ENCODE measurements at regions of chr11 and their contacts with region 1.

Region 1: GRCh38 chr11:65497141-65498041 is 1.5 kb upstream of the MALAT1 start:
- DNase-seq: peak; percentile 96 to 99 (median 98)
- ATAC-seq: peak; percentile 77 to 80
- H3K4me3 Mint-ChIP-seq: no peak overlapping the region
- H3K27ac Mint-ChIP-seq: no peak overlapping the region
- H3K4me1 Mint-ChIP-seq: peaks cover 16 to 31% (median 24%) of the 10 kb centered on the region in 4 donors
- H3K27me3 Mint-ChIP-seq: no peaks in the 10 kb centered on the region

Region 2: DNA sequence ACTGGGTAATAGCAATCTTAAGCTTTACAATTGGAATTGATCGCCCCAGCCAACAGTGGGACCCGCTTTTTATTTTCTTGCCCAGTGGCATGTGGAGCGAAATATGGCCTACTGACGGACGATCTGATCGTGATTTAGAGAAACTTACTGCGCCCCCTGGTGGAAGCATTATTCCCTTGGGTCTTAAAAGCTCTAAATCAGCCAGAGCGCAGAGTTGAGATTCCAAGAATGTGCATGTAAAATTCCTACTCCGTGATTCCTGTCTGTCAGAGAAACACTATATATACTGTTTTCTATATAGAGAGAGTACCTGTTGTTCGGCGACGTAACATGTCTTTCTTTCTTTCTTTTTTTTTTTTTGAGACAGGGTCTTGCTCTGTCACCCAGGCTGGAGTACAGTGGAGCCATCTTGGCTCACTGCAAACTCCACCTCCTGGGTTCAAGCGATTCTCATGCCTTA is 167.4 kb before region 1 on chr11:
- POLR2A ChIA-PET with region 1: interaction called, 22 read pairs
- DNase-seq: peak; percentile 63 to 92 (median 78)
- ATAC-seq: peak; percentile 19 to 24
- H3K4me3 Mint-ChIP-seq: peak overlapping the region in 3 of 10 donors; percentile 20 to 50 (median 26)
- H3K27ac Mint-ChIP-seq: peak overlapping the region in 9 of 10 donors; percentile 19 to 85 (median 71)
- H3K4me1 Mint-ChIP-seq: peaks cover 14 to 23% (median 19%) of the 10 kb centered on the region in 4 donors
- H3K27me3 Mint-ChIP-seq: peaks cover 0 to 4% (median 0%) of the 10 kb centered on the region in 5 donors

Region 3: DNA sequence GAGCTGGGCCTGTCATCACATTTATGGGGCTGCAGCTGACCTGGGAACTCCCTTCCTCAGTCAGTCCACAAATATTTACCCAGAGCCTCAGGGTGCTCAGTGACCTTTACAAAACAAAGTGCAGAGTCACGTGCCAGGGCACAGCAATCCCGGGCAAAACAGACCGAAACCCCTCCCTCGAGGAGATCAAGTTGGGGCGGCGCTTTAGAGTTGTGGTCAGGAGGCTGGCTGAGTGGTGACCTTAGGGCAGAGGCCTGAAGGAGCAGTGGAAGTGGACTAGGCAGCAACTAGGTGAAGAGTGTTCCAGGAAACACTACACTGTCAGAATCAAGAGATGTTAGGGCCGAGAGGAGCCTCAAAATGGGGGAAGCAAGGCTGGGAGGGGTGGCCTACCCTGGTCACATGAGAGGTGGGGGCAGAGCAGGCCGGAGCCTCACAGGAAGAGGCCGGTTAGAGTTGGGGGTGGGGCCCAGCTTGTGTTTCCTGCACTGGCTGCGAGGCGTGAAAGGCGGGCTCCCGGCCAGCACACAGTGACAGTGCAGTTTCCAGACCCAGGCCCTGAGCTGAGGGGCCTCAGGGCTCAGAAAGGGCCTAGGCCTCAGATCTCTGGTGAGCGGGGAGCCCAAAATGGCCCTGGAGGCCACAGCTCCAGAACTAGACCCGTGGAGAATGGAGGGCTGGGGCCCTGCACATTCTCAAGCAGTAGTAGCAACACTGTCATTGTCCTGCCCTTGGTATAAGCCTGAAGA is 78.5 kb before region 1 on chr11:
- POLR2A ChIA-PET with region 1: interaction called, 2,047 read pairs
- DNase-seq: peak in 9 of 10 donors; percentile 30 to 89 (median 53)
- ATAC-seq: peak in 1 of 2 donors; percentile 7
- H3K4me3 Mint-ChIP-seq: peak overlapping the region; percentile 89 to 98 (median 96)
- H3K27ac Mint-ChIP-seq: peak overlapping the region; percentile 94 to 100 (median 99)
- H3K4me1 Mint-ChIP-seq: peaks cover 38 to 72% (median 58%) of the 10 kb centered on the region in 4 donors
- H3K27me3 Mint-ChIP-seq: peaks cover 0 to 4% (median 0%) of the 10 kb centered on the region in 5 donors

Region 4: DNA sequence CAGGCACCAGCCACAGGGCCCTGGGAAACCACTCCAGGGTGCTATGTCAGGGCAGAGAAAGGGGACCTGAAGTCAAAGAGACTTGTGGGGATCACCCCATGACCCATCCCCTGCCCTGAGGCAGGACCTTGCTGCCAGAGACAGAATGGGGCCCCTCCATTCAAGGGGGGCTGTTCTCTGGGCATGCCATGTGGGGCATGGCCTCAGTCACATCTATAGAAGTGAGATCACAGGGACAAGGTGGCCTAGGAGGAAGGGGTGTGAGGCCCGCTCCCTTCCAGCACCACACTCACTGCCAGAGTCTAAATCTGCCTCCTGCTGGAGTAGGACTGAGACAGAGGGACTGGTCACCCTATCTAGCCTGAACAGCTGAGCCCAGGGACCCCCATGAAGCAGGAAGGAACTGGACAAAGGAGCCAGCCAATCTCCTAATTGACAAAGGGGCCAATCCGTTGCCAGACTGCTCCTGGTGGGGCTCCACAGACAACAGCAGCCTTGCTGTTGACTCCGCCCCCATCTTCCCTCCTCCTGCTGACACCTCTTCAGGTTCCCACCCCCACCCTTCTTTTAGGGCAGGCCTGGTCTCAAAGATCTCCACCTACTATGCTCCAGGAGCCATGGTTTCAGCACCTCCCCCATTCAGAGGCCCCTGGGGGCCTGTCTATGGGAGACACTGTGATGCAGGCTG is 48.8 kb before region 1 on chr11:
- POLR2A ChIA-PET with region 1: interaction called, 10 read pairs
- DNase-seq: no peak
- ATAC-seq: no peak
- H3K4me3 Mint-ChIP-seq: no peak overlapping the region
- H3K27ac Mint-ChIP-seq: peak overlapping the region in 8 of 10 donors; percentile 19 to 79 (median 38)
- H3K4me1 Mint-ChIP-seq: peaks cover 4 to 21% (median 8%) of the 10 kb centered on the region in 4 donors
- H3K27me3 Mint-ChIP-seq: no peaks in the 10 kb centered on the region

Region 5: GRCh38 chr11:65524741-65525545 is 27.6 kb after region 1 on chr11 and contains the start of gene SCYL1:
- POLR2A ChIA-PET with region 1: interaction called, 58 read pairs
- DNase-seq: peak; percentile 68 to 91 (median 80)
- ATAC-seq: peak; percentile 64 to 73
- H3K4me3 Mint-ChIP-seq: peak within 1 kb of the TSS; percentile 77 to 96 (median 88)
- H3K27ac Mint-ChIP-seq: peak within 1 kb of the TSS; percentile 90 to 99 (median 95)
- H3K4me1 Mint-ChIP-seq: peaks cover 36 to 66% (median 61%) of the 10 kb centered on the region in 4 donors
- H3K27me3 Mint-ChIP-seq: no peaks in the 10 kb centered on the region
- polyA plus RNA-seq, gene SCYL1: 23.2 to 41.5 (median 33.5) TPM

Region 6: GRCh38 chr11:65558002-65558931 is 60.9 kb after region 1 on chr11 and contains the start of gene LTBP3:
- POLR2A ChIA-PET with region 1: interaction called, 29 read pairs
- DNase-seq: peak in 6 of 10 donors; percentile 45 to 54 (median 50)
- ATAC-seq: peak; percentile 46 to 56
- H3K4me3 Mint-ChIP-seq: peak within 1 kb of the TSS; percentile 82 to 95 (median 91)
- H3K27ac Mint-ChIP-seq: peak within 1 kb of the TSS; percentile 88 to 98 (median 94)
- H3K4me1 Mint-ChIP-seq: peaks cover 37 to 66% (median 60%) of the 10 kb centered on the region in 4 donors
- H3K27me3 Mint-ChIP-seq: no peaks in the 10 kb centered on the region
- polyA plus RNA-seq, gene LTBP3: 7.3 to 35.0 (median 18.9) TPM

Region 7: GRCh38 chr11:65652511-65653231 is 155.3 kb after region 1 on chr11:
- POLR2A ChIA-PET with region 1: interaction called, 17 read pairs
- DNase-seq: peak; percentile 92 to 99 (median 96)
- ATAC-seq: peak; percentile 77 to 81
- H3K4me3 Mint-ChIP-seq: peak overlapping the region; percentile 73 to 95 (median 91)
- H3K27ac Mint-ChIP-seq: peak overlapping the region; percentile 96 to 99 (median 98)
- H3K4me1 Mint-ChIP-seq: peaks cover 38 to 66% (median 52%) of the 10 kb centered on the region in 4 donors
- H3K27me3 Mint-ChIP-seq: peaks cover 0 to 2% (median 0%) of the 10 kb centered on the region in 5 donors

Region 8: DNA sequence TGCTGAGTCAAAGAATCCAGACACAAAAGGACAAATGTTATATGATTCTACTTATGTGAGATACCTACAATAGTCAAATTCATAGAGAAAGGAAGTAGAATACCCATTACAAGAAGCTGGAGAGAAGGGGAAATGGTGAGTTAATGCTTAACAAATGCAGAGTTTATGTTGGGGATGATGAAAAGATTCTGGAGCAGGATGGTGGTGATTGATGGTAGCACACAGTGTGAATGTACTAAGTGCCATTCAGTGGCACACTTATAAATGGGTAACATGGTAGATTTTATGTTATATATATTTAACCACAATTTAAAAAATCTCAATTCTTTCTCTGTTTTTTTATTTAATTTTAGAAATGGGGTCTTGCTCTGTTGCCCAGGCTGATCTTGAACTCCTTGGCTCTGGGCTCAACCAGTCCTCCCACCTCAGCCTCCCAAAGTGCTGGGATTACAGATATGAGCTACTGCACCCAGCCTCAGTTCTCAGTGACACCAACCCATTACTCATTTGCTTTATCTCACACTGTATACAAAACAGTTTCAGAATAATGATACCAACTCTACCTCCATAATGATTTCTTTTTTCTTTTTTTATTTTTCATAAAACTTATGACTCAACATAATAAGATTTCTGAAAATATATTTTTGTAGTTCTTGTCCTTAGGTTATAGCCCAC is 174.9 kb after region 1 on chr11:
- POLR2A ChIA-PET with region 1: no interaction called
- DNase-seq: no peak
- ATAC-seq: no peak
- H3K4me3 Mint-ChIP-seq: no peak overlapping the region
- H3K27ac Mint-ChIP-seq: peak overlapping the region in 2 of 10 donors; percentile 2 to 15
- H3K4me1 Mint-ChIP-seq: no peaks in the 10 kb centered on the region
- H3K27me3 Mint-ChIP-seq: no peaks in the 10 kb centered on the region

Measured in naive thymus-derived CD8-positive, alpha-beta T cell (primary cell).